Heart left ventricle (tissue), 16 donors: ENCODE measurements at regions of chr3 and their contacts with region 1.

Region 1: DNA sequence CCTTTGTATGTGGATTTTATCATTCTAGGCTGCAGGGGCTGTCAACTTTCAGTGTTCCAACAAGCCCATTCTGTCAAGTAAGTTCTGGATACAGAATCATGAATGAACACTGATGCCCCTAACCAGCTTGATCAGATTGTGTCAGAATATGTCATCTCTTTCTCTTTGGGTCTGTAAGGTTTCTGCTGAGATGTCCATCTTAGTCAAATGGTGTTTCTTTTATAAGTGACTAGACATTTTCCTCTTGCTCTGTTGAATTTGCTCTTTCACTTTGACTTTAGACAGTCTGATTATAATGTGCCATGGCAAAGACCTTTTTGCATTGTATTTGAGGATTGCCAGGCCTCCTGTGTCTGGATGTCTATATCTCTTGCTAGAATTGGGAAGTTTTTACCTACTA is 660.9 kb upstream of the CBLB start:
- DNase-seq: no peak
- ATAC-seq: no peak
- H3K4me3 ChIP-seq: no peak overlapping the region
- H3K27ac ChIP-seq: no peak overlapping the region
- H3K4me1 ChIP-seq: no peaks in the 10 kb centered on the region
- H3K27me3 ChIP-seq: no peaks in the 10 kb centered on the region
- CTCF ChIP-seq: no peak
- POLR2A ChIP-seq: no peak

Region 2: DNA sequence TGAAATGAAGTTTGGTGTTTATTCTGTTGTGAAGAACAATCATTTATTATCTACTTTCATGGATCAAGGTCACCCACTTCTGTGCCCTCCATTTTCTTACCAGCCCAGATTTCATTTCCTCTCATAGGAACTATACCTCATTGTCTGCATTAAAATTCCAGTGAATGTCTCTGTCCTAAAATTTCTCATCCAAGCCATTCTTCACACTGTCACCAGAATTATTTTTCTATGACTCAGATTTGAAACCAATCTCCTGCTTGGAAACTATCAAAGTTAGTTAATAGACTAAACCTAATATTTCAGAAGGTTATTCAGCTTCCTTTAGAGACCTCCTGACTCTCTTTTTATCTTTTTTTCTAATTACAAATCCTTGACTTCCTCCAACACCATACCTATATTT is 296.8 kb before region 1 on chr3:
- intact Hi-C with region 1: no loop called
- DNase-seq: no peak
- ATAC-seq: no peak
- H3K4me3 ChIP-seq: no peak overlapping the region
- H3K27ac ChIP-seq: no peak overlapping the region
- H3K4me1 ChIP-seq: no peaks in the 10 kb centered on the region
- H3K27me3 ChIP-seq: no peaks in the 10 kb centered on the region
- CTCF ChIP-seq: no peak
- POLR2A ChIP-seq: no peak

Region 3: GRCh38 chr3:106512831-106513230 is 16.9 kb before region 1 on chr3:
- intact Hi-C with region 1: loop called in 1 of 10 experiments (anchors 1 kb)
- DNase-seq: no peak
- ATAC-seq: no peak
- H3K4me3 ChIP-seq: no peak overlapping the region
- H3K27ac ChIP-seq: no peak overlapping the region
- H3K4me1 ChIP-seq: no peaks in the 10 kb centered on the region
- H3K27me3 ChIP-seq: no peaks in the 10 kb centered on the region
- CTCF ChIP-seq: no peak
- POLR2A ChIP-seq: no peak